GM10248 (cell line): ENCODE measurements at regions of chr18 and their contacts with region 1.

Region 1: DNA sequence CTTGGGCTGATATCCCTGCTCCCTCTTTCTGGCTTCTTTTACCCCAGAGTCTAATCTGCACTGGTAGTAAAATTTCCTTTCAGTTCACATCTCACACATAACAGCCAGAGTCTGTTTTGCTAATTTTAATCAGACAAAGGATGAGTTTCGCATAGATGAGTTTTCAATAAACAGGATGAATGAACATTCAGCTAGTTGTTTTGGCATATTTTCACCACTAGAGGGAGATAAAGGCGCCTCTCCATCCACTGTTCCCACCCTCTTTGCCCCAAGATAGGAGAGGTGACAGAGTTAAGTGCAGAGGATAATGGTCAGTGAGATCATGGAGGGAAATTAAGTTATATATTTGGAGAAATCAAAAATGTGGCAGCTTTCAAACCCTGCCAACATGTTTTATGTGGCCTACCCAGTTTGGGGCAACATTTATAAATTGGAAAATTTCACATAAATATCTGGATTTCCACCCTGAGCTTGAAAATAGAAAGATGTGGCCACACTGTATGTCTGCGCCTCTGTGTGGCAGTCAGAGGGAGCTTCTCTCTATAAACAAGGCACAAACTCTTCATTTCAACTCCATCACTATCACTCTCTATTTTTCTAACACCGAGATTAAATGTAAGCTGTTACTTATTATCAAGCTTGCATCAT is 48.5 kb upstream of the DTNA start:
- DNase-seq: peak; percentile 42
- CTCF ChIP-seq: peak; percentile 70

Region 2: GRCh38 chr18:34122724-34123334 is 538.8 kb before region 1 on chr18:
- CTCF ChIA-PET with region 1: interaction called, 16 read pairs
- POLR2A ChIA-PET with region 1: no interaction called
- DNase-seq: peak; percentile 37
- CTCF ChIP-seq: peak; percentile 85

Region 3: DNA sequence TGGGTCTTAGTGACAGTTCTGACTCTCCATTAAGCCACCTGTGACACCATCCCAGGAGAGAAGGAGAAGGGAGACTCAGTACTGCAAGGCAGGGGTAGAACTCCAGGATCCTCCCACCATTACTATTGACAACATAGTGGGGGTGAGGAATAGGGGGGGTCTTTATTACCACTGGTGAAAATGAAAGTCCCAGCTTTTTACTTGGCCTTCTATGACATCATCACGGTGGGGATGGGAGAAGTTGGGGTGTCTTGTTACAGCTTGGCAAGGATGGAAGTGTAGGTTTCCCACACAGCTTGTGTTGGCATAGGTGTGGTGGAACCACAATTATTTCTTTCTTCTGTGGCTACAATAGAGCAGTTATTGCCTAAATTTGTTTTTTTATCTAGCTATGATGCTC is 155.4 kb before region 1 on chr18:
- CTCF ChIA-PET with region 1: no interaction called
- POLR2A ChIA-PET with region 1: no interaction called
- DNase-seq: no peak
- CTCF ChIP-seq: no peak

Region 4: GRCh38 chr18:34639687-34640086 is 21.9 kb before region 1 on chr18:
- CTCF ChIA-PET with region 1: interaction called, 42 read pairs
- POLR2A ChIA-PET with region 1: no interaction called
- DNase-seq: no peak
- CTCF ChIP-seq: no peak

Region 5: DNA sequence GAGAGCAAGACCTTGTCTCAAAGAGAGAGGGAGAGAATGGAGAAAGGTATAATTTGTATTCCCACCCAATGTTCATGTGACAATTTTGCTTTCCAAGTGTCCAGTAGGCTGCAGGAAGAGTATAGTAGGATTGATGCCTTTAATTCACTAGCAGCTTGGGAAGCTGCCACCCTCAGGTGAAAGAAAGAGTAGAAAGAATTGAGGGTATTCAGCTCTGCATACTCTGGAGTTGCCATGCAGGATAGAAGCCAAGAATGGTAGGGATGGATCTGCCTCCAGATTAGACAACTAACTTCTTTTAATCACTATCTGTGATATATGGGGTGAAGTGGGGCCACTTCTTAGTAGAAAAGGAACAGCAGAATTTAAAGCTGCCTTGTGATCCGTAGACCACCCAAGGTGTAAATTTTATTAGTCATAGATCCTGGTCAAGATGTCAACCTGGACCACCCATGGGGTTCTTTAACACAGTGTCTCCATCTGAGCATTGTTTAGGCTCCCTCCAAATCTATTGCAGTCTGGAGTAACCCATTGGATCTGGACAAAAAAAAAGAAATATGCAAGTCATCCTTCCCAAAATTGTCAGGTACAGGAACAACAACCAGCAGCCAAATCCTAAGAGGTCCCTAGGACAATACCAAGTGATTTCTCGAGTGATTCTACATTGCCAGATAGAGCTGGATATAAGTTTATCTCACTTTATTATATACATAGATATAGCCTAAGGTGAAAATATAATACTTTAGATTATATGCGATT is 15.4 kb after region 1 on chr18:
- CTCF ChIA-PET with region 1: interaction called, 66 read pairs
- POLR2A ChIA-PET with region 1: no interaction called
- DNase-seq: no peak
- CTCF ChIP-seq: no peak

Region 6: GRCh38 chr18:34787931-34788532 is 126.4 kb after region 1 on chr18:
- CTCF ChIA-PET with region 1: interaction called, 46 read pairs
- POLR2A ChIA-PET with region 1: no interaction called
- DNase-seq: peak; percentile 45
- CTCF ChIP-seq: peak; percentile 80